Heart right ventricle (tissue), 16 donors: ENCODE measurements at regions of chr12 and their contacts with region 1.

Region 1: DNA sequence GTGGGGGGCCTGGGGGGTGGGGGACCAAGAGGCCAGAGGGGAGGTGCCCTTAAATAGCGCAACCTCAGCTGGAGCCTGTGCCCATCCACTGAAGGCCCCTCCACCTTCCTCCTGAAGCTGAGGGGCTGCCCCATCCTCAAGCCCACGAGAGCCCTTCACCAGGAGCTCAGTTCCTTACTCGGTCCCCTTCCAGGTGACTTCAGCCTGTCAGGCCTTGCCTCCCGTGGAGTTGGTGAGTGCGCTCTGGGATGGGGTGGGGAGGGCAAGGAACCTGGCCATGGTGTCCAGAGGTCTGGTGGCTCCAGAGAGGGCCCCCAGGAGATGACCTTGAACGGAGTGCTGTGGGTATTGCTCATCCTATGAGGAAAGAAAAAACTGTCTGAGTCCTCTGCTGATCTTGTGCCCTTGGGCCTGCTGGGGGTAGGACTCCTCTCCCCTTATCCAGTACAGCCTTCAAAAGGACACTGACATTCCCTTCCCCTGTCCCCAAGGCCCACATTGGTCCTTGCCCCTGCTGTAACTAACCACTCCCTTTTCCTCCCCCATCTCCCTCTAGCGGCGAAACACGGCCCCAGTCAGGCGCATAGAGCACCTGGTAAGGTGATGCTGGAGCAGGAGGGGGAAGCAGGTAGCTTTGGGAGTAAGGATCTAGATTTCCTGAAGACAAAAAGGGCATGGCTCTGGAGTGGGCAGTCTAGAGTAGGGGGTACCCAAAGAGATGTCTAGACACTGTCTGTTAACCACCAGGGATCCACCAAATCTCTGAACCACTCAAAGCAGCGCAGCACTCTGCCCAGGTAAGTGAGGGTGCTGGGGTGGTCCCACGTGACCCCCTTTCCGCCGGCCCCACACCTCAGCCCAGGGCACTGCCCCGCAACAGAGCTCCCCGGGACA is 3.6 kb downstream of the TNS2 start:
- DNase-seq: peak; percentile 57 to 76
- ATAC-seq: peak; percentile 1 to 30 (median 12)
- H3K4me3 ChIP-seq: peak overlapping the region; percentile 34 to 92 (median 74)
- H3K27ac ChIP-seq: peak overlapping the region; percentile 95 to 100 (median 100)
- H3K4me1 ChIP-seq: peaks cover 35 to 99% (median 70%) of the 10 kb centered on the region in 9 donors
- H3K27me3 ChIP-seq: no peaks in the 10 kb centered on the region
- CTCF ChIP-seq: peak; percentile 54 to 81 (median 64)

Region 2: GRCh38 chr12:53079226-53080117 is 26.0 kb after region 1 on chr12 and contains the start of gene SPRYD3:
- intact Hi-C with region 1: loop called in 1 of 10 experiments (anchors 2 kb)
- DNase-seq: peak; percentile 96 to 97
- ATAC-seq: peak; percentile 98 to 100 (median 99)
- H3K4me3 ChIP-seq: peak within 1 kb of the TSS; percentile 55 to 95 (median 80)
- H3K27ac ChIP-seq: peak within 1 kb of the TSS; percentile 86 to 98 (median 96)
- H3K4me1 ChIP-seq: peaks cover 3 to 39% (median 24%) of the 10 kb centered on the region in 9 donors
- H3K27me3 ChIP-seq: no peaks in the 10 kb centered on the region
- CTCF ChIP-seq: no peak
- total RNA-seq, gene SPRYD3: 40.9 to 63.0 (median 47.4) TPM